ENCODE measurements at regions of chr12 and their contacts with region 1.

Region 1: DNA sequence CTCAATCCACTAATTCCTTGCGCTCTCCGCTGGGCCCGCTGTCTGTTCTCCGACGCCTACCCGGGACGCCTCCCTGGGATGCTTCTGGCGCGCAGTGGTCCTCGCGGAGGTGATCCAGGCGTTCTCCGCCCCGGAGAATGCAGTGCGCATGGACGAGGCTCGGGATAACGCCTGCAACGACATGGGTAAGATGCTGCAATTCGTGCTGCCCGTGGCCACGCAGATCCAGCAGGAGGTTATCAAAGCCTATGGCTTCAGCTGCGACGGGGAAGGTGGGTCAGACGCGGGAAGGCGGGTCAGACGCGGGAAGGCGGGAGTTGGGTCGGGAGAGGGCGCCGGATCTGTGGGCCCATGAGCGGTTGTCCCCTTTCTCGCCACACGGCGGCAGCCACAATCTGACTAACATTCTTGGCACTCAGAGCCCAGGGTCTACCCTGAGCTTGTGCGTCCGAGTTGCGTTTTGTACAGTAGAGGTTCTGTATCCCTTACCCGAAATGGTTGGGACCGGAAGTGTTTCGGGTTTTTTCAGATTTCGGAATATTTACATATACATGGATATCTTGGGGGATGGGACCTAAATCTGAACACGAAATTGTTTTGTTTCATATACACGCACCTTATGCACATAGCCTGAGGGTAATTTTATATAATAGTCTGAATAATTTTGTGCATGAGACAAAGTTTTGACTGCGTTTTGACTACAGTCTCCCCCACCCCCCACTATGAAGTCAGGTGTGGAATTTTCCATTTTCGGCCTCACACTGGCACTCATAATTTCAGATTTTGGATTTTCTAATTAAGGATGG is 762 bp downstream of the C12orf57 start:
- DNase-seq: peak; percentile 86 to 96 (median 94)
- H3K4me3 ChIP-seq: peak overlapping the region; percentile 60 to 95 (median 82)
- H3K27ac ChIP-seq: peak overlapping the region; percentile 86 to 100 (median 98)
- H3K27me3 ChIP-seq: no peaks in the 10 kb centered on the region
- CTCF ChIP-seq: peak; percentile 56 to 98 (median 92)

Region 2: GRCh38 chr12:6996040-6996441 is 51.5 kb after region 1 on chr12:
- intact Hi-C with region 1: no loop called
- DNase-seq: peak in 1 of 10 donors; percentile 82
- H3K4me3 ChIP-seq: no peak overlapping the region
- H3K27ac ChIP-seq: peak overlapping the region in 1 of 59 donors; percentile 31
- H3K27me3 ChIP-seq: no peaks in the 10 kb centered on the region
- CTCF ChIP-seq: no peak

Region 3: GRCh38 chr12:7006639-7007038 is 62.1 kb after region 1 on chr12:
- intact Hi-C with region 1: no loop called
- DNase-seq: no peak
- H3K4me3 ChIP-seq: no peak overlapping the region
- H3K27ac ChIP-seq: no peak overlapping the region
- H3K27me3 ChIP-seq: no peaks in the 10 kb centered on the region
- CTCF ChIP-seq: no peak

Region 4: GRCh38 chr12:7018350-7019042 is 73.9 kb after region 1 on chr12 and contains the start of gene LPCAT3:
- intact Hi-C with region 1: loop called in 1 of 2 experiments (anchors 5 kb)
- DNase-seq: peak; percentile 96 to 99 (median 98)
- H3K4me3 ChIP-seq: peak within 1 kb of the TSS; percentile 68 to 97 (median 89)
- H3K27ac ChIP-seq: peak within 1 kb of the TSS; percentile 63 to 98 (median 91)
- H3K27me3 ChIP-seq: no peaks in the 10 kb centered on the region
- CTCF ChIP-seq: peak; percentile 69 to 97 (median 88)
- total RNA-seq, gene LPCAT3: 10.6 to 35.2 (median 20.4) TPM

Region 5: GRCh38 chr12:7092229-7092985 is 147.8 kb after region 1 on chr12 and contains the start of gene C1R:
- intact Hi-C with region 1: loop called in 1 of 2 experiments (anchors 5 kb)
- DNase-seq: peak in 9 of 10 donors; percentile 52 to 69 (median 60)
- H3K4me3 ChIP-seq: peak within 1 kb of the TSS; percentile 32 to 80 (median 60)
- H3K27ac ChIP-seq: peak within 1 kb of the TSS in 29 of 59 donors; percentile 0 to 79 (median 47)
- H3K27me3 ChIP-seq: peaks cover 0 to 2% (median 0%) of the 10 kb centered on the region in 45 donors
- CTCF ChIP-seq: peak; percentile 77 to 93 (median 87)
- total RNA-seq, gene C1R: 7.4 to 140 (median 26.2) TPM

Region 6: GRCh38 chr12:7101694-7102131 is 157.1 kb after region 1 on chr12:
- intact Hi-C with region 1: loop called in 1 of 2 experiments (anchors 5 kb)
- DNase-seq: no peak
- H3K4me3 ChIP-seq: no peak overlapping the region
- H3K27ac ChIP-seq: no peak overlapping the region
- H3K27me3 ChIP-seq: no peaks in the 10 kb centered on the region
- CTCF ChIP-seq: no peak

Region 7: GRCh38 chr12:7113389-7113871 is 168.8 kb after region 1 on chr12:
- intact Hi-C with region 1: loop called in 1 of 2 experiments (anchors 5 kb)
- DNase-seq: no peak
- H3K4me3 ChIP-seq: no peak overlapping the region
- H3K27ac ChIP-seq: no peak overlapping the region
- H3K27me3 ChIP-seq: no peaks in the 10 kb centered on the region
- CTCF ChIP-seq: peak; percentile 62 to 95 (median 82)

Region 8: GRCh38 chr12:7645394-7646177 is 701.0 kb after region 1 on chr12:
- intact Hi-C with region 1: loop called in 1 of 2 experiments (anchors 10 kb)
- DNase-seq: peak in 2 of 10 donors; percentile 16 to 36
- H3K4me3 ChIP-seq: no peak overlapping the region
- H3K27ac ChIP-seq: no peak overlapping the region
- H3K27me3 ChIP-seq: peaks cover 0 to 4% (median 0%) of the 10 kb centered on the region in 45 donors
- CTCF ChIP-seq: peak; percentile 64 to 92 (median 84)

Measured in dorsolateral prefrontal cortex (tissue), 120 donors.